Body of pancreas (tissue), 4 donors: ENCODE measurements at regions of chr3 and their contacts with region 1.

Region 1: GRCh38 chr3:49539659-49540560 is 14.4 kb upstream of the BSN start:
- DNase-seq: peak; percentile 96 to 97 (median 96)
- ATAC-seq: peak; percentile 92
- H3K4me3 ChIP-seq: no peak overlapping the region
- H3K27ac ChIP-seq: peak overlapping the region; percentile 73 to 86 (median 81)
- H3K4me1 ChIP-seq: peaks cover 33% of the 10 kb centered on the region
- H3K27me3 ChIP-seq: no peaks in the 10 kb centered on the region
- CTCF ChIP-seq: peak; percentile 80 to 97 (median 96)
- POLR2A ChIP-seq: peak; percentile 34 to 80 (median 79)

Region 2: GRCh38 chr3:48891606-48892005 is 648.3 kb before region 1 on chr3:
- intact Hi-C with region 1: no loop called
- DNase-seq: no peak
- ATAC-seq: no peak
- H3K4me3 ChIP-seq: no peak overlapping the region
- H3K27ac ChIP-seq: no peak overlapping the region
- H3K4me1 ChIP-seq: peaks cover 6% of the 10 kb centered on the region
- H3K27me3 ChIP-seq: no peaks in the 10 kb centered on the region
- CTCF ChIP-seq: no peak
- POLR2A ChIP-seq: no peak

Region 3: DNA sequence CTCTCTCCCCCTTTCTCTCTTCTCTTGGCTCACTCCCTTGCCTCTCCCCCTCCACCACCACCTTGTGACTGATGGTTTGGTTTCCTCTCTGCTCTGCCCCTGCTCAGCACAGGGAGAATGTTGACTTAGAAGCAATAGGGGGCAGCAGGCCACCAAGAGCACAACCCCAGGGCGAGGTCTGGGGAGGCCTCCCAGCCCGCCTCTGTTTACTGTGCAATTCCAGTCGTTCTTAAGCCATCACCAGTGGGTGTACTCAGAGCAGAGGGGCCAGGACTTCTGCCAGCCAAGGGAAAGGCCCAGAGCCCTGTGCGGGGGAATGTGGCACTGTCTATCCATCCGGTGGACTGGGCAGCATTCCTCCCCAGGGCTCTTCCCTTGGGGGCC is 128.5 kb after region 1 on chr3:
- intact Hi-C with region 1: loop called (anchors 5 kb)
- DNase-seq: no peak
- ATAC-seq: no peak
- H3K4me3 ChIP-seq: no peak overlapping the region
- H3K27ac ChIP-seq: no peak overlapping the region
- H3K4me1 ChIP-seq: peaks cover 30% of the 10 kb centered on the region
- H3K27me3 ChIP-seq: no peaks in the 10 kb centered on the region
- CTCF ChIP-seq: no peak
- POLR2A ChIP-seq: no peak

Region 4: GRCh38 chr3:49675912-49676311 is 136.0 kb after region 1 on chr3:
- intact Hi-C with region 1: loop called (anchors 5 kb)
- DNase-seq: no peak
- ATAC-seq: no peak
- H3K4me3 ChIP-seq: no peak overlapping the region
- H3K27ac ChIP-seq: no peak overlapping the region
- H3K4me1 ChIP-seq: peaks cover 28% of the 10 kb centered on the region
- H3K27me3 ChIP-seq: no peaks in the 10 kb centered on the region
- CTCF ChIP-seq: no peak
- POLR2A ChIP-seq: no peak